Sigmoid colon (tissue), 7 donors: ENCODE measurements at regions of chr9 and their contacts with region 1.

Region 1: GRCh38 chr9:34651876-34652601 is at the start of gene IL11RA:
- DNase-seq: peak; percentile 97
- H3K4me3 ChIP-seq: peak within 1 kb of the TSS; percentile 43 to 56 (median 50)
- H3K27ac ChIP-seq: peak within 1 kb of the TSS; percentile 83 to 91 (median 88)
- H3K4me1 ChIP-seq: peaks cover 0 to 80% (median 69%) of the 10 kb centered on the region in 4 donors
- H3K27me3 ChIP-seq: no peaks in the 10 kb centered on the region
- CTCF ChIP-seq: no peak
- EP300 ChIP-seq: no peak
- POLR2A ChIP-seq: peak in 1 of 2 donors; percentile 47
- total RNA-seq, gene IL11RA: 67.3 to 110 (median 90.7) TPM

Region 2: GRCh38 chr9:34796924-34797323 is 144.9 kb after region 1 on chr9:
- intact Hi-C with region 1: no loop called
- DNase-seq: no peak
- H3K4me3 ChIP-seq: no peak overlapping the region
- H3K27ac ChIP-seq: no peak overlapping the region
- H3K4me1 ChIP-seq: no peaks in the 10 kb centered on the region
- H3K27me3 ChIP-seq: peaks cover 0 to 6% (median 0%) of the 10 kb centered on the region in 3 donors
- CTCF ChIP-seq: no peak
- EP300 ChIP-seq: no peak
- POLR2A ChIP-seq: no peak

Region 3: GRCh38 chr9:34994260-34994899 is 342.3 kb after region 1 on chr9:
- intact Hi-C with region 1: loop called (anchors 5 kb)
- DNase-seq: no peak
- H3K4me3 ChIP-seq: peak overlapping the region in 2 of 4 donors; percentile 5 to 18
- H3K27ac ChIP-seq: peak overlapping the region in 3 of 4 donors; percentile 95 to 100 (median 98)
- H3K4me1 ChIP-seq: peaks cover 0 to 77% (median 72%) of the 10 kb centered on the region in 4 donors
- H3K27me3 ChIP-seq: no peaks in the 10 kb centered on the region
- CTCF ChIP-seq: peak; percentile 48 to 66 (median 60)
- EP300 ChIP-seq: no peak
- POLR2A ChIP-seq: no peak